HCT116 (cell line): ENCODE measurements at regions of chr3 and their contacts with region 1.

Region 1: DNA sequence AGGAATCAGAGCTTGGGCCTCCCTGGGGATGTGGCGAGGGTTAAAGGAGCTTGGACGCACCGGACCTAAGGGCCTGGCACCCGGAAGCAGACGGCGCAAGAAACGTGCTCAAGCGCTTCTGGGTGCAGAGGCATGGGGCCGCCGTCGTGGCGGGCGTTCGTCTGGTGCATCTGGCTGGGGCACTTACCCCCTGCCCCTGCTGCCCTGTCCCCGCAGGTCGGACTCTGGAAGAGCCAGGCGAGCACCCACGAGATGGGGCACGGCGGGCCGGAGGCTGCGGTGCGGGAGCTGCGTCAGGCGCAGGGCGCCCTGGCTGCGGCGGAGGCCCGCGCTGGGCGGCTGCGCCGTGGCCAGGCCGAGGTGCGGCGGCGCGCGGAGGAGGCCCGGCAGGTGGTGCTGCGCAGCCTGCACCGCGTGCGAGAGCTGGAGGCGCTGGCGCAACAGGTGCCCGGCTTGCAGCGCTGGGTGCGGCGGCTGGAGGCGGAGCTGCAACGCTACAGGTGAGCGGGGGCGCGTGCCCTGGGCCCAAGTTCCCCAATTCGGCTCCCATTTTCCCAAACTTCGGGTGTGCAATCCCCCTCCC is 2.6 kb downstream of the EFCC1 start:
- DNase-seq: peak; percentile 65
- ATAC-seq: peak; percentile 96
- H3K4me3 ChIP-seq: peak overlapping the region; percentile 49 to 54
- H3K27ac ChIP-seq: peak overlapping the region; percentile 68
- H3K4me1 ChIP-seq: peaks cover 11 to 18% of the 10 kb centered on the region in 2 experiments; a peak in 3 of 4 replicates
- H3K27me3 ChIP-seq: no peaks in the 10 kb centered on the region
- CTCF ChIP-seq: 0 out of 6 replicates have a peak, but pooled peaks of 2 of the 3 experiments have one; percentile 16 to 17
- POLR2A ChIP-seq: peak; percentile 89
- RAD21 ChIP-seq: no peak; the same call in 1 of the 2 replicates

Region 2: DNA sequence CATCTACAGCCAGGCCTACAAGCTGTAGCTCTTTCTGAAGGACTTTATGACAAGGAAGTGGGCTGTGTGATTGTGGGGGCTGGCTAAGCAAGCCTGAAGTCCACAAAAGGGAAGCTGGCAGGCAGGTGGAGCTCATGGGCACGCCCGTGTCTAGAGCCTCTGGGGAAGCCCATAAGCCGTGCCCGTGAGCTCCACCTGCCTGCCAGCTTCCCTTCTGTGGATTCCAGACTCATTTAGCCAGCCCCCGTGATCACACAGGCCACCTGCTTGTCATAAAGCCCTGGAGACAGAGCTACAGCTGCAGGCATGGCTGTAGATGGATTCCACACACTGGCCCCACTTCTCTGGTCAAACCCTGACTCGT is 12.7 kb after region 1 on chr3:
- CTCF ChIA-PET with region 1: interaction called, 11 read pairs
- POLR2A ChIA-PET with region 1: interaction called, 5 read pairs
- RAD21 ChIA-PET with region 1: interaction called in 1 of 2 experiments, 4 read pairs
- intact Hi-C with region 1: no loop called
- DNase-seq: no peak
- ATAC-seq: peak; percentile 89
- H3K4me3 ChIP-seq: no peak overlapping the region
- H3K27ac ChIP-seq: no peak overlapping the region
- H3K4me1 ChIP-seq: peaks cover 19 to 25% of the 10 kb centered on the region in 2 experiments
- H3K27me3 ChIP-seq: no peaks in the 10 kb centered on the region
- CTCF ChIP-seq: peak; percentile 10 to 46 (median 44); a peak in 3 of 6 replicates
- POLR2A ChIP-seq: no peak
- RAD21 ChIP-seq: no peak; the same call in 1 of the 2 replicates

Region 3: DNA sequence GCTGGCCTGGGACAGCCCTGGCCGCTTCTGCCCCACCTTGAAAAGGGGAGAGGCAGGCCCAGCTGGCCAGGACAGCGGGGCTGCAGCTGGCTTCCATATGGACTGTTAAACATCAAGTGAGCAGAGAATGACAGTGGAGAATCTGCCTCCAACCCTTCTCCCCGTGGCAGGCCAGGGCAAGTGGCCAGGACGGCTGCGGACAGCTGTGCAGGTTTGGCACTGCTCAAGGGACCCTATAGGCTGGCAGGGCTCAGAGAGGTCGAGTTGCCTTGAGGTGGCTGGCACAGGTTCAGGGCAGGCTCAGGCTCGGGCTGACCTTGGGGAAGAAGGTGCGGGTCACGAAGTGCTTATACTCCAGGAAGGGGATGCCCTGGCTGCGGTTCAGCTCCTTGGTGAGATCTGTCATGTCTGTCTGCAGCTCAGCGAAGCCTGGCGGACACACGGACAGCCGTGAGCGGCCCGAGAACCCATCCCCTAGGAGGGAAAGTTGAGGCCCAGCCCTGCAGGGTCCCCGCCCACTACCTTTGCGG is 563.6 kb after region 1 on chr3:
- CTCF ChIA-PET with region 1: no interaction called
- POLR2A ChIA-PET with region 1: no interaction called
- RAD21 ChIA-PET with region 1: no interaction called
- intact Hi-C with region 1: no loop called
- DNase-seq: no peak
- ATAC-seq: no peak
- H3K4me3 ChIP-seq: no peak overlapping the region
- H3K27ac ChIP-seq: no peak overlapping the region
- H3K4me1 ChIP-seq: no peaks in the 10 kb centered on the region
- H3K27me3 ChIP-seq: no peaks in the 10 kb centered on the region
- CTCF ChIP-seq: no peak
- POLR2A ChIP-seq: no peak
- RAD21 ChIP-seq: no peak